Calu3 (cell line): ENCODE measurements at regions of chr6 and their contacts with region 1.

Region 1: GRCh38 chr6:43769526-43770416 is at the start of gene VEGFA:
- DNase-seq: peak; percentile 97
- H3K4me3 Mint-ChIP-seq: peak within 1 kb of the TSS; percentile 87
- H3K27ac Mint-ChIP-seq: peak within 1 kb of the TSS; percentile 95
- H3K4me1 Mint-ChIP-seq: peaks cover 52% of the 10 kb centered on the region
- H3K27me3 Mint-ChIP-seq: no peaks in the 10 kb centered on the region
- CTCF ChIP-seq: peak; percentile 99
- total RNA-seq, gene VEGFA: 345 and 407 TPM in 2 replicates

Region 2: DNA sequence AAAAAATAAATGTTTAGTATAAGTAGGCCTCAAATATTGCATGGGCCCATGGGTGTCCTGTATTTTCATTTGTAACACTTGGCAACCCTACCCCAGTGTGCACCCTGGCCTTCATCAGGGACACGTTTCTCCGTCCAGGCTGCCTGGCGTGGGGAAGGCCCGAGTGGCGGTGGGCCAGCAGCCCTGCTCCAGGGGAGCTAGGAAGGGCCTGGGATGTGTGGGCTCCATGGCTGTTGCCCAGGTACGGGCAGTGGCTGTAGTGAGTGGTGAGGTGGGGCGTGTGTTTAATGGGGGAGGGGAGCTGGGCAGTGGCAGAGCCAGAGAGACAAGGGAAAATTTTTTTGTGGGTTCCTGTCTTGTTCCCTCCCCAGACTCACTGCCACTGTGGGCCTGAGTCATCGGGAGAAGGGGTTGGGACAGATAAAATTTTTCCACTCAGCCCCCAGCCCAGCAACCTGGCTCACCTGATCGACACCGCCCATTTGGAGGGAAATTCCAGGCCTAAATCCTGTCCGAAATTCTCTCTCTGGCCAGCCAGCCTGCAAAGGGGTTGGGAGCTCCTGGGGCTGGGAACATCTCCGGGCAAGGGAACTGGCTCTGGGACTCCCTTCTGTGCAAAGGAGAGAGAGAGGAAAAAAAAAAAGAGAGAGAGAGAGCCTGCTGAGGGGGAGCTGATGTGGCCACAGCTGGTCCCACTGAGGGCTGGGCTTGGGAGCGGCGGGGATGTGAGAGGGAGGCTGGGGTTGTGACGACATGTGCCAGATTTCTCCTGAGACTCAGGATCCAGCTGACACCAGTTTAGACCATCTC is 32.3 kb before region 1 on chr6:
- CTCF ChIA-PET with region 1: no interaction called
- intact Hi-C with region 1: no loop called
- DNase-seq: no peak
- H3K4me3 Mint-ChIP-seq: no peak overlapping the region
- H3K27ac Mint-ChIP-seq: peak overlapping the region; percentile 3
- H3K4me1 Mint-ChIP-seq: peaks cover 41% of the 10 kb centered on the region
- H3K27me3 Mint-ChIP-seq: no peaks in the 10 kb centered on the region
- CTCF ChIP-seq: no peak

Region 3: GRCh38 chr6:43809417-43810291 is 39.9 kb after region 1 on chr6:
- CTCF ChIA-PET with region 1: interaction called, 5 read pairs
- intact Hi-C with region 1: loop called (anchors 5 kb)
- DNase-seq: peak; percentile 74
- H3K4me3 Mint-ChIP-seq: no peak overlapping the region
- H3K27ac Mint-ChIP-seq: peak overlapping the region; percentile 34
- H3K4me1 Mint-ChIP-seq: peaks cover 91% of the 10 kb centered on the region
- H3K27me3 Mint-ChIP-seq: no peaks in the 10 kb centered on the region
- CTCF ChIP-seq: no peak

Region 4: DNA sequence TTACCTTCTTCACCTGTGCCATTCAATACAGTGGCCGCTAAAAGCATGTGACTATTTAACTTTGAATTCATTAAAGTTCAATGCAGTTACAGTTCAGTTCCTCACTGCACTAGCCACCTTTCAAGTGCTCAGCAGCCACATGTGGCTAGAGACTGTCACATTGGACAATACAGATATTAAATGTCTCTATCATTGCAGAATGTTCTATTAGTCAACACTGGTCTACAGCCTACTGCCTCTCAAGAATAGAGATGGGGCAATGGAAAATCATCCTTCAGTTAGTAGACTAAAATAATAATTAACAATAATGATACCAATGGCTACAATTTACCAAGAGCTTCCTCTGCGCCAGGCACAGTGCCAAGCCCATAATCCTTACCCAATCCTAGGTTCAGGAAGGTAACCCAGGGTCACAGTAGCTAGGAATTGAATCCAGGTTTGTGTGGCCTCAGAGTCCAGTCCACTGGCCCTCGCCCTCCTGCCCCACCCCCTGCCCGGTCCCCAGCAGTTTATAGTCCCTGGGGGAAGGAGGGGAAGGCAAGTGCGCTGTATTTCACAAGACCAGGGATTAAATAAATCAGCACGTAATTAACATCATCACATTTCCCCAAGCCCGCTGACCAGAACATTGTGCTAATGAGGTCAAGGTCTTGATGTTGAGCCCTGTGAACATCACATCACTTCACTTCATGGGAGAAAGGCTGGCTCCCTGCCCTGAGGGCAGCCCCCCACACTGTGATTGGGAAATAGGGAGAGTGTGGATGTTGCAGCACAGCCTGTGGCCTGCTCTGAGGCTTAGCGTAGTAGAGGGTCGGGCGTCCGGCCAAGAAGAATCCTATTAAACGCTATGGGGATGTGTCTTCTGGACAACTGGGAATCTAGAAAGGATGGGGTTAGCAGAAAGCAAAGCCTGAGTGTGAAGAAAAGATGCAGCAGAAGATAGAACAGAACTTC is 147.4 kb after region 1 on chr6:
- CTCF ChIA-PET with region 1: interaction called, 4 read pairs
- intact Hi-C with region 1: loop called (anchors 2 kb)
- DNase-seq: peak; percentile 58
- H3K4me3 Mint-ChIP-seq: no peak overlapping the region
- H3K27ac Mint-ChIP-seq: peak overlapping the region; percentile 95
- H3K4me1 Mint-ChIP-seq: peaks cover 88% of the 10 kb centered on the region
- H3K27me3 Mint-ChIP-seq: no peaks in the 10 kb centered on the region
- CTCF ChIP-seq: no peak

Region 5: GRCh38 chr6:43951063-43951755 is 181.4 kb after region 1 on chr6:
- CTCF ChIA-PET with region 1: interaction called, 22 read pairs
- intact Hi-C with region 1: loop called (anchors 2 kb)
- DNase-seq: peak; percentile 91
- H3K4me3 Mint-ChIP-seq: no peak overlapping the region
- H3K27ac Mint-ChIP-seq: no peak overlapping the region
- H3K4me1 Mint-ChIP-seq: peaks cover 32% of the 10 kb centered on the region
- H3K27me3 Mint-ChIP-seq: no peaks in the 10 kb centered on the region
- CTCF ChIP-seq: peak; percentile 74

Region 6: GRCh38 chr6:44010411-44011349 is 240.9 kb after region 1 on chr6:
- CTCF ChIA-PET with region 1: interaction called, 11 read pairs
- intact Hi-C with region 1: loop called (anchors 1 kb)
- DNase-seq: peak; percentile 74
- H3K4me3 Mint-ChIP-seq: no peak overlapping the region
- H3K27ac Mint-ChIP-seq: peak overlapping the region; percentile 58
- H3K4me1 Mint-ChIP-seq: peaks cover 57% of the 10 kb centered on the region
- H3K27me3 Mint-ChIP-seq: no peaks in the 10 kb centered on the region
- CTCF ChIP-seq: no peak

Region 7: GRCh38 chr6:44064089-44064947 is 294.5 kb after region 1 on chr6:
- CTCF ChIA-PET with region 1: no interaction called
- intact Hi-C with region 1: no loop called
- DNase-seq: peak; percentile 88
- H3K4me3 Mint-ChIP-seq: peak overlapping the region; percentile 1
- H3K27ac Mint-ChIP-seq: peak overlapping the region; percentile 63
- H3K4me1 Mint-ChIP-seq: peaks cover 40% of the 10 kb centered on the region
- H3K27me3 Mint-ChIP-seq: no peaks in the 10 kb centered on the region
- CTCF ChIP-seq: no peak